Caco-2 (cell line): ENCODE measurements at regions of chr9 and their contacts with region 1.

Region 1: DNA sequence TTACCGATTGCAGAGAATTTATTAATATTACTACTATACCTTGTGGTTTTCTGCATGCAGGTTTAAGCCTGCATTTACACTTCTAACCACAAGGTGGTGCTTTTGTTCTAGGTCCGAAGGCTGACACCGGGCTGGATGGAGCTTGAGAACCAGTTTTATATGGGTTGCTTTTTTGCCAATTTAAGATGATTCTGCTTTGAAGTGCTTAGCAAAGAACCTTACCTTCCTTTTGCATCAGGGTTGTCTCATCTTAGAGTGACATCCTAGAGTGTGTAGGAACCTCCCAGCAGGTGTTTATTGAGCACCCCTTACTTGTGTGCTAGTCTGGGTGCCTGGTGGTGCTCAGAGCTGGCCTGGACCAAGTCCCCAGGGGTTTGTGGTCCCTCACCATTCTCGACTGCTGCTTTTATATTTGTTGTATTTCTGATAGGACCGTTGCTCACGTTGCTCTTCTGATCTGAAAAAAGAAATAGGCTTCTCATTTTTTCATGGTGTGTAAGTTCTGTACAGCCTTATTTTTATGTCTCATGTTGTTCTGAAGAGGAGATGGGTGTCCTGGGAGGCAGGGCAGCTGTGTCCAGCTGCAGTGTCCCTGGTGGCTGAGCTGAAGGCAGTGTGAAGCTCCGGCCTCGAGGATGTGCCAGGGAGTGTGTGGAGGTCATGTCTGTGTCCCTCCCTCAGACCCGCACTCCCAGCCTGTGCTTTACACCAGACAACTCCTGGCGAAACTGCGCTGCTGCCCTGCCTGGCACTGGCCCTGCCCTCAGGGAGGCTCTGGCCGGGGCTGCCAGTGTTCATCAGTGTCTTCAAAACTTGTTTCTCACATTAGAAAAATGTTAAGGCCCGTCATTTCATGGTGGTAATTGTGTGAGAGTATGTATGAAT is 54.3 kb downstream of the EHMT1 start:
- DNase-seq: peak in 1 of 2 experiments; percentile 63
- H3K4me3 ChIP-seq: no peak overlapping the region
- H3K4me3 Mint-ChIP-seq: no peak overlapping the region
- H3K27ac Mint-ChIP-seq: no peak overlapping the region
- H3K4me1 ChIP-seq: no peaks in the 10 kb centered on the region
- H3K4me1 Mint-ChIP-seq: peaks cover 18% of the 10 kb centered on the region
- H3K27me3 ChIP-seq: no peaks in the 10 kb centered on the region
- H3K27me3 Mint-ChIP-seq: no peaks in the 10 kb centered on the region
- CTCF ChIP-seq: peak; percentile 74 to 84

Region 2: GRCh38 chr9:137689745-137690529 is 16.8 kb after region 1 on chr9:
- CTCF ChIA-PET with region 1: interaction called, 18 read pairs
- POLR2A ChIA-PET with region 1: no interaction called
- intact Hi-C with region 1: loop called (anchors 1 kb)
- DNase-seq: peak in 1 of 2 experiments; percentile 61
- H3K4me3 ChIP-seq: no peak overlapping the region
- H3K4me3 Mint-ChIP-seq: no peak overlapping the region
- H3K27ac Mint-ChIP-seq: peak overlapping the region; percentile 32
- H3K4me1 ChIP-seq: no peaks in the 10 kb centered on the region
- H3K4me1 Mint-ChIP-seq: peaks cover 18% of the 10 kb centered on the region
- H3K27me3 ChIP-seq: no peaks in the 10 kb centered on the region
- H3K27me3 Mint-ChIP-seq: no peaks in the 10 kb centered on the region
- CTCF ChIP-seq: no peak

Region 3: DNA sequence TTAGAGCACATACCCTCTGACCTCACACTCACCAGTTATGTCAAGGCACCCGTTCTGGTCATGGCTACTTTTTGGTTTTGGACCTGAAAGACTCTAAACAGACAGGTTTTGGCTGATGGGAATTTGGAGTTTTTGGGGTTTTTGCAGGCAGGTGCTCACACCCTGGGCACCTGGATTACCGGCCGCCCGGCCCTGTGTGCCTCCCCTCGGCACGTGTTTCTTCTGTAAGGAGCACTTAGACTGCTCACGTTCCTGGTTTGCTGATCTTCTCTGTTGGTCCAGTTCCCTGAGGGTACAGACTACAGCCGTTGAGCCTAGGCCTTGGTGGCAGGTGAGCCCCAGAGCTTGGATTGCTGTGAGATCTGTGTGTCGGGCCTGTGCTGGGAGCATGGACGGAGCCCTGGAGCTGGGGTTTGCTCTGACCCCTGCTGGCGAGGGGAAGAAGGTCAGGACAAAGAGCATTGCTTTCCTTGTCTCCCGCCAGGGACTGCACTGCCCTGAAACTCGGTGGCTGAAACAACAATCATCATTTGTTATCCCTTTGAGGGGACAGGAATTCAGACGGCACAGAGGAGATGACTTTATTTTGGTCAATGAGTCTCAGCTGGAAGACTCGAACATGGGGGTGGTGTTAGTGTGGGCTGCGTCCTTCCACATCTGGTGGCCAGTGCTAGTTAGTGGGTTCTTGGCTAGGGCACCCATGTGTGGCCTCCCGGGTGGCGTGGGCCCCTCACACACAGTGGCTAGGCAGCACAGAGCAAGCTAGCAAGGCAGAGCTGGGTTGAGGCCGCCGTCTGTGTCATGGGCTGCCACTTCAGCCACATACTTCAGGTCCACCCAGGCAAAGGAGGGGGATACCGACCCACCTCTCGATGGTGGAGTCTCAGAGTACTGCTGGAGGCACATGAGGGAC is 22.1 kb after region 1 on chr9:
- CTCF ChIA-PET with region 1: interaction called, 18 read pairs
- POLR2A ChIA-PET with region 1: no interaction called
- intact Hi-C with region 1: loop called (anchors 1 kb)
- DNase-seq: peak; percentile 49 to 64
- H3K4me3 ChIP-seq: no peak overlapping the region
- H3K4me3 Mint-ChIP-seq: no peak overlapping the region
- H3K27ac Mint-ChIP-seq: no peak overlapping the region
- H3K4me1 ChIP-seq: no peaks in the 10 kb centered on the region
- H3K4me1 Mint-ChIP-seq: peaks cover 14% of the 10 kb centered on the region
- H3K27me3 ChIP-seq: no peaks in the 10 kb centered on the region
- H3K27me3 Mint-ChIP-seq: no peaks in the 10 kb centered on the region
- CTCF ChIP-seq: peak; percentile 69

Region 4: GRCh38 chr9:137772281-137772873 is 99.2 kb after region 1 on chr9:
- CTCF ChIA-PET with region 1: interaction called, 3 read pairs
- POLR2A ChIA-PET with region 1: no interaction called
- intact Hi-C with region 1: loop called (anchors 2 kb)
- DNase-seq: peak in 1 of 2 experiments; percentile 16
- H3K4me3 ChIP-seq: no peak overlapping the region
- H3K4me3 Mint-ChIP-seq: no peak overlapping the region
- H3K27ac Mint-ChIP-seq: peak overlapping the region; percentile 56
- H3K4me1 ChIP-seq: no peaks in the 10 kb centered on the region
- H3K4me1 Mint-ChIP-seq: no peaks in the 10 kb centered on the region
- H3K27me3 ChIP-seq: no peaks in the 10 kb centered on the region
- H3K27me3 Mint-ChIP-seq: no peaks in the 10 kb centered on the region
- CTCF ChIP-seq: no peak

Region 5: DNA sequence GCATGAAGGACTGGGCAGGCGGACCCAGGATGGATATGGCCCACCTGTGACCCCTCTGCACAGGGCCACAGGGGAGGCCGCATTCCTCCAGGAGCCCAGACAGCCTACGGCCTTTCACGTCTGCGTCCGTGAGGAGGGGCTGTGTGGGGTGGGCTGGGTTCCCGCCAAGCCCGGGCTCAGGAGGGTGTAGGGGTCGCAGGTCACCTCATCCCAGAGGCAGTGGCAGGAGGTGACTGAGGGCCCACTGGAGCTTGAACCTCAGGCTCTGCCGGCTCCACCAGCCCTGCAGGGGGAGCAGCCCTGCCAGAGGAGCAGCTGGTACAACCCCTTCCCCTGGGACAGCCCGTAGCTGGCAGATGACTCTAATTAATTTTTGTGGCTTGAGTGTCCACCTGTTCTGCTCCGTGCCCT is 163.7 kb after region 1 on chr9:
- CTCF ChIA-PET with region 1: no interaction called
- POLR2A ChIA-PET with region 1: no interaction called
- intact Hi-C with region 1: no loop called
- DNase-seq: no peak
- H3K4me3 ChIP-seq: no peak overlapping the region
- H3K4me3 Mint-ChIP-seq: no peak overlapping the region
- H3K27ac Mint-ChIP-seq: no peak overlapping the region
- H3K4me1 ChIP-seq: no peaks in the 10 kb centered on the region
- H3K4me1 Mint-ChIP-seq: no peaks in the 10 kb centered on the region
- H3K27me3 ChIP-seq: no peaks in the 10 kb centered on the region
- H3K27me3 Mint-ChIP-seq: no peaks in the 10 kb centered on the region
- CTCF ChIP-seq: no peak